Common myeloid progenitor, CD34-positive (primary cell): ENCODE measurements at regions of chr12 and their contacts with region 1.

Region 1: DNA sequence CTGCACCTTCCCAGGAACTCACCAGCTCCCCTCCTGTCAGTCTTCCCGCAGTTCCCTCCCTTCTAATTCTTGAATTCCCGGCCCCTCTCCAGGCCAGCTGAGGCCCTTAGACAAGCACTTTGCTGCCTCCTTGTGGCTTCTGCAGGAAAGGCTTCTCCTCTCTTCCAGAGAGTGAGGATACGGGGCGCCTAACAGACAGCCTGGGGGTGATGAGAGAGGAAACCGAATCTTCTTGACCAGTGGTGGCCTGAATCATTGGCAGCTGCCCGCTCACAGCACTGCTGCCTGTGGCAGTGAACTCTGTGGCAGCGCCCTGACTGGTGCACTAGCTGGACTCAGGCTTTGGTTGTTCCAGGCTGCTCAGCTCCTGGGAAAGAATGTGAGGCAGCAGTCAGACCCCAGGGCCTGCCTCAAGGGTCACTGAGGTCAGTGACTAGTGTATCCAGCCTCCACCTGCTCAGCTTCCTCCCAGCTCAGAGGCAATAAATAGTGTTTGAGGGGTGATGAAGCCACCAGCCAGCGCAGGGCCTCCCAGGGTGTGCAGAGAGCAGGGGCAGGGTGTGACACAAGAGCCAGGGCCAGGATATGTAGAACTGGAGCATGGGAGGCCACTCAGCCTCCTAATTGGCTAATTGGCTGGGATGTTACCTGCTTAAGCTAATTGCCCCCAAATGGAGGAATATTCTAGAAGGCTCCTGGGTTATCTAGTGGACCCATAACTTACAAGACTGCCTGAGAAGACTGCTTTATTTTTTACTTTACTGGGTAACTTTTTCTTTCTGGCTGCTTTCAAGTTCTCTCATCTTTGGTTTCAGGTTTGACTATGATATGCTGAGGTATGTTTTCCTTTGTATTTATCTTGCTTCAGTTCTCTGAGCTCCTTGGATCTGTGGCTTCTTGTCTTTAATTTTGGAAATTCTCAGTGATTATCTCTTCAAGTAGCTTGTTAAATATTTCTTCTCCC is 12.9 kb upstream of the MCRS1 start:
- DNase-seq: peak; percentile 37 to 61 (median 56)
- H3K4me3 ChIP-seq: no peak overlapping the region
- H3K27ac ChIP-seq: no peak overlapping the region
- H3K4me1 ChIP-seq: no peaks in the 10 kb centered on the region
- H3K27me3 ChIP-seq: no peaks in the 10 kb centered on the region

Region 2: GRCh38 chr12:49482095-49483051 is 98.5 kb before region 1 on chr12:
- CTCF ChIA-PET with region 1: no interaction called
- POLR2A ChIA-PET with region 1: no interaction called
- DNase-seq: no peak
- H3K4me3 ChIP-seq: no peak overlapping the region
- H3K27ac ChIP-seq: no peak overlapping the region
- H3K4me1 ChIP-seq: peaks cover 0 to 5% (median 2%) of the 10 kb centered on the region in 4 experiments
- H3K27me3 ChIP-seq: no peaks in the 10 kb centered on the region

Region 3: GRCh38 chr12:49553512-49554088 is 27.3 kb before region 1 on chr12:
- CTCF ChIA-PET with region 1: interaction called, 223 read pairs
- POLR2A ChIA-PET with region 1: no interaction called
- DNase-seq: peak; percentile 66 to 75 (median 74)
- H3K4me3 ChIP-seq: no peak overlapping the region
- H3K27ac ChIP-seq: no peak overlapping the region
- H3K4me1 ChIP-seq: peaks cover 0 to 18% (median 12%) of the 10 kb centered on the region in 4 experiments
- H3K27me3 ChIP-seq: peaks cover 0 to 8% (median 0%) of the 10 kb centered on the region in 5 experiments

Region 4: GRCh38 chr12:49567611-49568441 is 13.0 kb before region 1 on chr12 and contains the start of gene MCRS1:
- CTCF ChIA-PET with region 1: interaction called, 223 read pairs
- POLR2A ChIA-PET with region 1: interaction called, 3 read pairs
- DNase-seq: peak; percentile 92 to 97 (median 97)
- H3K4me3 ChIP-seq: peak within 1 kb of the TSS; percentile 87 to 99 (median 94)
- H3K27ac ChIP-seq: peak within 1 kb of the TSS; percentile 94 to 96
- H3K4me1 ChIP-seq: peaks cover 4 to 54% (median 39%) of the 10 kb centered on the region in 4 experiments
- H3K27me3 ChIP-seq: no peaks in the 10 kb centered on the region

Region 5: DNA sequence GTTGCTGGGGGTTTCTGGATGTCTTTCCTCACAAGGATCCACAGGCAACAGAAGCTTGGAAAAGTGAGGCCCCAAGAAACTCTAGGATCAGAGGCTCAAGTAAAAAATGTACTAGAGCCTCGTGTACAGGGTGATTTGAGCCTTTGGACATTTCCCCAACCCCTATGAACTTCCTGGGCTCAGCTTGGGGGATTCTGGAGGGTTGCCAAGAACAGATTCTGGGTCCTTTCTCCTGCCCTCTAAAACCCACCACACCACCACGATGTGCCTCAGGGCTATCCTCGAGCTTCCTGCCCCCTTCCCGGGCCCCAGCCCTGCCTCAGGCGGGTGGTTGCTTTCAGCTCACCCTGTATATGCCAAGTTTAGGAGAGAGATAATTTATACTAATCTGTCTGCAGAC is 24.0 kb after region 1 on chr12:
- CTCF ChIA-PET with region 1: interaction called, 10 read pairs
- POLR2A ChIA-PET with region 1: no interaction called
- DNase-seq: peak in 1 of 3 donors; percentile 6
- H3K4me3 ChIP-seq: no peak overlapping the region
- H3K27ac ChIP-seq: no peak overlapping the region
- H3K4me1 ChIP-seq: peaks cover 0 to 9% (median 7%) of the 10 kb centered on the region in 4 experiments
- H3K27me3 ChIP-seq: no peaks in the 10 kb centered on the region

Region 6: DNA sequence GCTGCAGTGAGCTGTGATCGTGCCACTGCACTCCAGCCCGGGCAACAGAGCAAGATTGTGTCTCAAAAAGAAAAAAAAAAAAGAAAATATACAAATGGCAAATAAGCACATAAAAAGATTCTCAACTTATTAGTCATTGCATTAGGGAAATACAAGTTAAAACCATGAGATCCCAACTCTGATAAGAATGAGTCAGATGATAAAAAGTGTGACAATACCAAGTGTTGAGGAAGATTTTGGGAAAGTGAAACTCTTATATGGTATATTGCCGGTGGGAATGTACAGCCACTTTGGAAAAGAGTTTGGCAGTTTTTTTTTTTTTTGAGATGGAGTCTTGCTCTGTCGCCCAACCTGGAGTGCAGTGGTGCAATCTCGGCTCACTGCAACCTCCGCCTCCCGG is 34.9 kb after region 1 on chr12:
- CTCF ChIA-PET with region 1: interaction called, 11 read pairs
- POLR2A ChIA-PET with region 1: no interaction called
- DNase-seq: no peak
- H3K4me3 ChIP-seq: no peak overlapping the region
- H3K27ac ChIP-seq: no peak overlapping the region
- H3K4me1 ChIP-seq: no peaks in the 10 kb centered on the region
- H3K27me3 ChIP-seq: peaks cover 0 to 14% (median 5%) of the 10 kb centered on the region in 5 experiments

Region 7: DNA sequence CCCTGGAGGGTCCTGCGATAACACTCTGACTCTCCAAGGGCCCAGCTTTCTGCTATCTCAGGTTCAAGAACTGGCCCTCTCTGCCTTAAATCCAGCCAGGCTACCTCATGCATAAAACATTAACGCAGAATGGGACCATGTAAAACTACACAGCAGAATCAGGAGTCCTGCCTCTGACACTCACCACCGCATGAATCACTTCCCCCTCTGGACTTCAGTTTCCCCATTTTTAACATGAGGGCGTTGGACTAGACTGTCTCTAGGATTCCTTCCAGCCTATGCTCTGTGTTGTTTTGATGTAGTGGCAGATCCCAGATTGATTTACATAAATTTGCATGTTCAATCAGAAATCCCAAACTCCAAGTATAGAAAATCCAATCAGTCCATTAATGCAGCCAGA is 244.0 kb after region 1 on chr12:
- CTCF ChIA-PET with region 1: no interaction called
- POLR2A ChIA-PET with region 1: no interaction called
- DNase-seq: peak; percentile 46 to 88 (median 84)
- H3K4me3 ChIP-seq: peak overlapping the region in 1 of 7 experiments; percentile 20
- H3K27ac ChIP-seq: peak overlapping the region in 1 of 2 experiments; percentile 34
- H3K4me1 ChIP-seq: peaks cover 11 to 68% (median 48%) of the 10 kb centered on the region in 4 experiments
- H3K27me3 ChIP-seq: no peaks in the 10 kb centered on the region